Naive thymus-derived CD4-positive, alpha-beta T cell (primary cell): ENCODE measurements at regions of chr12 and their contacts with region 1.

Region 1: GRCh38 chr12:46276756-46277155 is 7.9 kb upstream of the SLC38A1 start:
- DNase-seq: no peak
- ATAC-seq: no peak
- H3K4me3 ChIP-seq: no peak overlapping the region
- H3K4me3 Mint-ChIP-seq: no peak overlapping the region
- H3K27ac ChIP-seq: no peak overlapping the region
- H3K27ac Mint-ChIP-seq: peak overlapping the region in 1 of 9 donors; percentile 20
- H3K4me1 ChIP-seq: no peaks in the 10 kb centered on the region
- H3K4me1 Mint-ChIP-seq: peaks cover 3 to 29% (median 16%) of the 10 kb centered on the region in 7 donors
- H3K27me3 ChIP-seq: no peaks in the 10 kb centered on the region
- H3K27me3 Mint-ChIP-seq: no peaks in the 10 kb centered on the region

Region 2: DNA sequence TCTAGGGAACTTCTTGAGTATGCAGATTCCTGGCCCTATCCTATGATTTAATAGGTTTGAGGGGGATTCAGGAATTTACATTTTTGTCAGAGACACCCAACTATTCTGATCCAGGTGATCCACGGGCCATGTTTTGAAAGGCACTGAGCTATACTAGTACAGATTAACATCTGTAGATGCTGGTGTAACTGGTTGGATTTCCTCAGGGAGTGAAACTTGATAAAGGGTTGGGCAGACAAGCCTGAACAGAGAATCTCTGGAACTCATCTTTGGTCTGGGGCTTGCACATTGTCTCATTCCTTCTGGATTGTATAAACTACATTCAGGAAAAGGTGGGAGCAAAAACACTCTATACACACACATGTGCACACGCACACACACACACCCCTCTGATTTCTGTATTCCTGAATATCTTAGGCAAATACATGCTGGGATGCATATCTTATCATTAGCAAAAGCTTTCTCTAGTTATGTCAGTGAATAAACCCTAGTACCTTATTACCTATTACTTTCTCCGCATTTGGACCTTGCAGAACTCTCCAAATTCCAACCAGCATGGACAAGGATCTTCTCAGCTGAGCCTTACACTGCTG is 112.5 kb before region 1 on chr12:
- CTCF ChIA-PET with region 1: no interaction called
- POLR2A ChIA-PET with region 1: no interaction called
- intact Hi-C with region 1: no loop called
- DNase-seq: no peak
- ATAC-seq: no peak
- H3K4me3 ChIP-seq: no peak overlapping the region
- H3K4me3 Mint-ChIP-seq: no peak overlapping the region
- H3K27ac ChIP-seq: no peak overlapping the region
- H3K27ac Mint-ChIP-seq: no peak overlapping the region
- H3K4me1 ChIP-seq: no peaks in the 10 kb centered on the region
- H3K4me1 Mint-ChIP-seq: peaks cover 0 to 3% (median under 1%) of the 10 kb centered on the region in 7 donors
- H3K27me3 ChIP-seq: no peaks in the 10 kb centered on the region
- H3K27me3 Mint-ChIP-seq: no peaks in the 10 kb centered on the region

Region 3: DNA sequence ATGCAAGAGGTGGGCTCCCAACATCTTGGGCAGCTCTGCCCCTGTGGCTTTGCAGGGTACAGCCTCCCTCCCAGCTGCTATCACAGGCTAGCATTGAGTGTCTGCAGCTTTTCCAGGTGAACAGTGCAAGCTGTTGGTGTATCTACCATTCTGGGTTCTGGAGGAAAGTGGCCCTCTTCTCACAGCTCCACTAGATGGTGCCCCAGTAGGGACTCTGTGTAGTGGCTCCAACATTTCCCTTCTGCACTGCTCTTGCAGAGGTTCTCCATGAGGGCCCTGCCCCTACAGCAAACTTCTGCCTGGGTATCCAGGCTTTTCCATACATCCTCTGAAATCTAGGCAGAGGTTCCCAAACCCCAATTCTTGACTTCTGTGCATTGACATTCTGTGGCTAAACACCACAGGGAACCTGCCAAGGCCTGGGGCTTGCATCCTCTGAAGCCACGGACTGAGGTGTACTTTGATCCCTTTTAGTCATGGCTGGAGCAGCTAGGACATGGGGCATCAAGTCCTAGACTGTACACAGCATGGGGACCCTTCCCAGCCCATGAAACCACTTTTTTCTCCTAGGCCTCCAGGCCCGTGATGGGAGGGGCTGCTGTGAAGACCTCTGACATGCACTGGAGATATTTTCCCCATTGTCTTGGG is 16.1 kb after region 1 on chr12:
- CTCF ChIA-PET with region 1: interaction called, 3 read pairs
- POLR2A ChIA-PET with region 1: no interaction called
- intact Hi-C with region 1: loop called in 1 of 2 experiments (anchors 2 kb)
- DNase-seq: no peak
- ATAC-seq: no peak
- H3K4me3 ChIP-seq: no peak overlapping the region
- H3K4me3 Mint-ChIP-seq: no peak overlapping the region
- H3K27ac ChIP-seq: no peak overlapping the region
- H3K27ac Mint-ChIP-seq: no peak overlapping the region
- H3K4me1 ChIP-seq: no peaks in the 10 kb centered on the region
- H3K4me1 Mint-ChIP-seq: peaks cover 0 to 9% (median 0%) of the 10 kb centered on the region in 7 donors
- H3K27me3 ChIP-seq: no peaks in the 10 kb centered on the region
- H3K27me3 Mint-ChIP-seq: peaks cover 0 to 3% (median 0%) of the 10 kb centered on the region in 5 donors